B cell (primary cell): ENCODE measurements at regions of chr17 and their contacts with region 1.

Region 1: GRCh38 chr17:1516388-1517161 is at the start of gene INPP5K:
- DNase-seq: peak; percentile 99
- ATAC-seq: peak; percentile 90
- H3K4me3 ChIP-seq: peak within 1 kb of the TSS; percentile 88 to 96 (median 94)
- H3K4me3 Mint-ChIP-seq: peak within 1 kb of the TSS; percentile 88
- H3K27ac ChIP-seq: peak within 1 kb of the TSS; percentile 67 to 90
- H3K27ac Mint-ChIP-seq: peak within 1 kb of the TSS; percentile 92
- H3K4me1 ChIP-seq: peaks cover 10 to 28% of the 10 kb centered on the region in 2 donors
- H3K4me1 Mint-ChIP-seq: peaks cover 21% of the 10 kb centered on the region
- H3K27me3 ChIP-seq: no peaks in the 10 kb centered on the region
- H3K27me3 Mint-ChIP-seq: no peaks in the 10 kb centered on the region
- CTCF ChIP-seq: no peak
- total RNA-seq, gene INPP5K: 76.7 and 77.9 TPM in 2 replicates

Region 2: DNA sequence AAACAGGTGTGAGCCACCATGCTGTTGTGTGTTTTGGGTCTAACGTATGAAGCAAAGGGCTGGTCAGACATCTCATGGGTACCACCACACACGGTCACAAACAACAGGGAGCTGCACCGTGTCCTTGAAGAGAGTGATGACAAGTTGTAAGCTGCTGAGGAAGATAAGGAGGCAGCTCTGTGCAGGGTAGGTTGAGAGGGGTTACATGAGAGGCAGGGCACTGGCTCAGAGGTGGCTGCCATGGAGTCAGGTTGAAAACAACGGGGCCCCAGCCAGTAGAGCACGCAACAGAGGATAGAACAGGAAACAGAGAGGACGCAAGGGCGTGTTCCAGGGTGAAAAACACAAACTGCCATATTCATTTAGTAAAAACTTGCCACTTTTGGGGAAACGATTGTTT is 184.9 kb before region 1 on chr17:
- CTCF ChIA-PET with region 1: interaction called, 18 read pairs
- POLR2A ChIA-PET with region 1: no interaction called
- intact Hi-C with region 1: no loop called
- DNase-seq: no peak
- ATAC-seq: peak; percentile 24
- H3K4me3 ChIP-seq: no peak overlapping the region
- H3K4me3 Mint-ChIP-seq: peak overlapping the region; percentile 0
- H3K27ac ChIP-seq: no peak overlapping the region
- H3K27ac Mint-ChIP-seq: no peak overlapping the region
- H3K4me1 ChIP-seq: peaks cover 3 to 7% of the 10 kb centered on the region in 2 donors
- H3K4me1 Mint-ChIP-seq: peaks cover 11% of the 10 kb centered on the region
- H3K27me3 ChIP-seq: peaks cover 0 to 7% (median 1%) of the 10 kb centered on the region in 4 experiments
- H3K27me3 Mint-ChIP-seq: no peaks in the 10 kb centered on the region
- CTCF ChIP-seq: no peak

Region 3: GRCh38 chr17:1399679-1400512 is 116.7 kb before region 1 on chr17 and contains the start of gene YWHAE:
- CTCF ChIA-PET with region 1: interaction called, 18 read pairs
- POLR2A ChIA-PET with region 1: interaction called, 18 read pairs
- intact Hi-C with region 1: loop called (anchors 1 kb)
- DNase-seq: peak; percentile 96
- ATAC-seq: peak; percentile 81
- H3K4me3 ChIP-seq: peak within 1 kb of the TSS; percentile 75 to 94 (median 85)
- H3K4me3 Mint-ChIP-seq: peak within 1 kb of the TSS; percentile 100
- H3K27ac ChIP-seq: peak within 1 kb of the TSS; percentile 84 to 94
- H3K27ac Mint-ChIP-seq: peak within 1 kb of the TSS; percentile 99
- H3K4me1 ChIP-seq: peaks cover 20 to 35% of the 10 kb centered on the region in 2 donors
- H3K4me1 Mint-ChIP-seq: peaks cover 32% of the 10 kb centered on the region
- H3K27me3 ChIP-seq: no peaks in the 10 kb centered on the region
- H3K27me3 Mint-ChIP-seq: no peaks in the 10 kb centered on the region
- CTCF ChIP-seq: no peak
- total RNA-seq, gene YWHAE: 149 and 151 TPM in 2 replicates

Region 4: DNA sequence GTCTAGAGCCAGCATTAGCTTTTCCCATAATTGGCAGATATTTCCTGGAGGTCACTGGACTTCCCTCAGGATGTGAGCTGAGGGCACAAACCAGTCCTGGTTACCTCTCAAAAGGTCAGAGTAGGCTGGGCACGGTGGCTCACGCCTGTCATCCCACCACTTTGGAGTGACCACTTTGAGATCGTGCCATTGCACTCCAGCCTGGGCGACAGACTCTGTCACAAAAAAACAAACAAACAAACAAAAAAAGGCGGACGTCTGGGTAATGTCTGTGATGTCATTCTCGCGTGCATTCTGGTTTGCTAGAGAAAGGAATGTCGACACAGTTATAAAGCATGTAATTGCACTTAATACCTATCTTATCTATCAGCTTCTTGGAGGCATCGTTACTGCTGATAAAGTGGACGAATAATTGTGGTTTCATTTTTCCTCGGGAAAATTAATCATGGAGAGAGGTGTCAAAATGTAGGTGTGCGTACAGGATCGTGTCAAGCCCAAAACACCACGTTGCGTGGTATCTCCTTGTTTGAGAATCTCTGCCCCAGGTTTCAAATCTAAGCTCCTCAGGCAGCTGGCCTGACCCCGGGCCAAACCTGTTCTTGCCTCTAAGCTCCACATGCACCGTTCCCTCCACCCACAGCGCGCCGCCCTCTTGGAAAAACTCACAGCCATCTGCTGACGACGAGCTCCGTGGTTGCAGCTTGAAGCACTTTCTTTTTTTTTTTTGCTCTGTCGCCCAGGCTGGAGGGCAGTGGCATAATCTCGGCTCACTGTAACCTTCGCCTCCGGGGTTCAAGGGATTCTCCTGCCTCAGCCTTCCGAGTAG is 54.1 kb before region 1 on chr17:
- CTCF ChIA-PET with region 1: interaction called, 13 read pairs
- POLR2A ChIA-PET with region 1: interaction called, 11 read pairs
- intact Hi-C with region 1: loop called (anchors 1 kb)
- DNase-seq: peak; percentile 24
- ATAC-seq: no peak
- H3K4me3 ChIP-seq: peak overlapping the region in 2 of 5 experiments; percentile 4 to 30
- H3K4me3 Mint-ChIP-seq: peak overlapping the region; percentile 76
- H3K27ac ChIP-seq: no peak overlapping the region
- H3K27ac Mint-ChIP-seq: peak overlapping the region; percentile 91
- H3K4me1 ChIP-seq: peaks cover 20 to 37% of the 10 kb centered on the region in 2 donors
- H3K4me1 Mint-ChIP-seq: peaks cover 29% of the 10 kb centered on the region
- H3K27me3 ChIP-seq: peaks cover 0 to 2% (median 0%) of the 10 kb centered on the region in 4 experiments
- H3K27me3 Mint-ChIP-seq: peaks cover 4% of the 10 kb centered on the region
- CTCF ChIP-seq: no peak

Region 5: DNA sequence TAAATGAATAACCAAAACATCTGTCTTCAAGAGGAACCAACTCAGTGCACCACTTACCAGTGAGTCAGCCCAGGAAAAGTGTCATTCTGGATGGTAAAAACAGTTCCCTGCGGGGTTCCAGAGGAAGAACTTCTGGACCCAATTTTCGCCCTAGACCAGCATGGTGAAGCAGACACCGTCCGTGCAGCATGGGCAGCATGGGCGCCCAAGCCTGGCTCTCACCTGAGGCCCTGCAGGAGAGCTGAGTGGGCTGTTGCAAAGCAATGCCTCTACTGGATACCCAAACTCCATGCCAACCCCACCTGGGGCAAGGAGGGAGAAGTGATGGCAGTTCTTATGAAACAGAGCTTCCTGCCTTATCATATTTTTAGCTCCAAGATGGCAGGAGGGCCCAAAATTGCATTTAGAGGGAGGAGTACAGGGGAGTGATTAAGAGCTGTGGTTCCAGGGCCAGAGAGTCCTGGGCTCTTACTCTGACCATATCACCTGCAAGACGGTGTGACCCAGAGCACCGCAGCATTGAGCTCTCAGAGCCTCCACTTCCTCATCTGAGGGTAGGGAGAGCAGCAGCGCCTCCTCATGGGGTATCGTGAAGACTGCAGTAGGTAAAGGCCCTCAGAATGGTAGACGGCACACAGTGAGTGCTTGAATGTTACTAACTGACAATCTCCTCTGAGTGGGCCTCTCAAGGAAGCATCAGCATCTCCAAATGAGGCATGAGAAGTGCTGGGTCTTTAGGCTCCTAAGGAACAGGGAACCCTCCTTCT is 16.4 kb after region 1 on chr17:
- CTCF ChIA-PET with region 1: interaction called, 19 read pairs
- POLR2A ChIA-PET with region 1: no interaction called
- intact Hi-C with region 1: no loop called
- DNase-seq: peak; percentile 74
- ATAC-seq: peak; percentile 93
- H3K4me3 ChIP-seq: no peak overlapping the region
- H3K4me3 Mint-ChIP-seq: no peak overlapping the region
- H3K27ac ChIP-seq: no peak overlapping the region
- H3K27ac Mint-ChIP-seq: no peak overlapping the region
- H3K4me1 ChIP-seq: peaks cover 0 to 5% of the 10 kb centered on the region in 2 donors
- H3K4me1 Mint-ChIP-seq: peaks cover 6% of the 10 kb centered on the region
- H3K27me3 ChIP-seq: no peaks in the 10 kb centered on the region
- H3K27me3 Mint-ChIP-seq: no peaks in the 10 kb centered on the region
- CTCF ChIP-seq: peak; percentile 72

Region 6: DNA sequence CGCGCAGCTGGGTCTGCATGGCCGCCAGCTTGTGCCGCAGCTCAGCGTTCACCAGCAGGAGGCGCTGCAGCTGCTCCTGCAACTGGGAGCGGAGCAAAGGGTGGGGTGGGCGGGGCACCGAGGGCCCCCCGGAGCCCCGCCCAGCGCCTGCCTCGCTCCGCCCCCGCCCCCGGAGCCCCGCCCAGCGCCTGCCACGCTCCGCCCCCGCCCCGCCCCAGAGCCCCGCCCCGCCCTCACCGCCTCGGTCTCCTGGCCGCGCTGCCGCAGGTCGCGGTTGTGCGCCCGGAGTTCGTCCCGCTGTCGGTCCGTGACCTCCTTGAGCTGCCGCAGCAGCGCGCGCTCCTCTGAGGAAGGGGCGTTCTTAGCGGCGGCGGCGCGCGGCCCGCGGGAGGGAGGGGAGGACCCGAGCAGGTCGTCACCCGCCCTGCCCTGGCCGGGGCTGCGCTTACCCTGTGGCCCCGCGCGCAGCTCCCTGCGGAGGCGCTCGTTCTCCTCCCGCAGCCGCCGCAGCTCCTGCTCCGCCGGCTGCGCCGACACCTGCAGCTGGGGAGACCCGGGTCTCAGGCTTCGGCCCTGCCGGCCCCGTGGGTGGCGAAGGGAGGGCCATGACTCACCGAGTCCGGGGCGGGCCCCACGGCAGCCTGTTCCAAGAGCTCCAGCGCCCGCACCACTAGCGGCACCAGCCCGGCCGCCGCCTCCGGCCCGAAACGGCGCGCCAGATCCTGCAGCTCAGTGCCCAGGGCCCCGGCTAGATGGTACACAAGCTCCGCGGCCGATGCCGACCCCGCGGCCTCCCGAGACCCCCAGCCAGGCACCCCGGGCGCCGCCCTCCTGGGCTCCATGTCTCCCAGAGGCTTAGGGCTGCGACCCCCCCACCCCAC is 132.6 kb after region 1 on chr17:
- CTCF ChIA-PET with region 1: interaction called, 15 read pairs
- POLR2A ChIA-PET with region 1: interaction called, 5 read pairs
- intact Hi-C with region 1: loop called (anchors 5 kb)
- DNase-seq: peak; percentile 96
- ATAC-seq: peak; percentile 72
- H3K4me3 ChIP-seq: peak overlapping the region in 4 of 5 experiments; percentile 35 to 75 (median 60)
- H3K4me3 Mint-ChIP-seq: peak overlapping the region; percentile 79
- H3K27ac ChIP-seq: peak overlapping the region in 1 of 2 donors; percentile 28
- H3K27ac Mint-ChIP-seq: peak overlapping the region; percentile 75
- H3K4me1 ChIP-seq: peaks cover 26 to 36% of the 10 kb centered on the region in 2 donors
- H3K4me1 Mint-ChIP-seq: peaks cover 30% of the 10 kb centered on the region
- H3K27me3 ChIP-seq: no peaks in the 10 kb centered on the region
- H3K27me3 Mint-ChIP-seq: no peaks in the 10 kb centered on the region
- CTCF ChIP-seq: peak; percentile 79